ENCODE measurements at regions of chr3 and their contacts with region 1.

Region 1: DNA sequence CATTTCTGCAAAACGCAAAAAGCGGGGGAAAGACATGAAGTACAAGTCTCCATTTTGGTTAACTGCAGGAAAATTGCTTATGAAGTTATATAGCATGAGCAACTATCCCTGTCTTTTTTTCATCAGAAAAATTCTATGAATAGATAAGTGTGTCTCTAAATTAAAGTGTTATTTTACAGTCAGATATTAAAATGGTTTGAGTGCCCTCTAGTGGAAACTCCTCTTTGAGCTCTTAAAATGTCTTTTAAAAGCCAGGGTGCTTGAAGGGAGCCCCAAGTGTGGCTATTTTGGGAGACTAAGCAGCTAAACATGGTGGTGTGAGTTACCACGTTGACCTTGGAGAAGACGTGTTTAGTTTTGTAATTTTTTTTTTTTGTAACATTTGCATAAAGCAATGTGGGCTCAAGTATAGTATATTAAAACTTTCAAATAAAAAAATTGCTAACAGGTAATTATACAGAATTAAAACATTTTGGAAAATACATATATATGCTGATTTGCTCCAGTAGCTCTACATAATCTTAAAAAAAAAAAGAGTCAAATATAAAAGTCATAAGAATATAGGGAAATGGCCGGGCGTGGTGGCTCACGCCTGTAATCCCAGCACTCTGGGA is 77.2 kb downstream of the PPP2R3A start:
- DNase-seq: peak; percentile 80
- ATAC-seq: peak; percentile 67
- H3K4me3 ChIP-seq: no peak overlapping the region
- H3K27ac ChIP-seq: no peak overlapping the region
- H3K4me1 ChIP-seq: no peaks in the 10 kb centered on the region
- H3K27me3 ChIP-seq: no peaks in the 10 kb centered on the region
- CTCF ChIP-seq: peak; percentile 75

Region 2: GRCh38 chr3:135905058-135905724 is 137.5 kb before region 1 on chr3:
- CTCF ChIA-PET with region 1: interaction called, 8 read pairs
- POLR2A ChIA-PET with region 1: no interaction called
- intact Hi-C with region 1: loop called (anchors 1 kb)
- DNase-seq: peak; percentile 49
- ATAC-seq: peak; percentile 29; the same call in 1 of the 2 replicates
- H3K4me3 ChIP-seq: no peak overlapping the region
- H3K27ac ChIP-seq: no peak overlapping the region
- H3K4me1 ChIP-seq: peaks cover 23% of the 10 kb centered on the region
- H3K27me3 ChIP-seq: no peaks in the 10 kb centered on the region
- CTCF ChIP-seq: peak; percentile 57

Region 3: GRCh38 chr3:135918580-135918962 is 124.1 kb before region 1 on chr3:
- CTCF ChIA-PET with region 1: interaction called, 3 read pairs
- POLR2A ChIA-PET with region 1: no interaction called
- intact Hi-C with region 1: loop called (anchors 1 kb)
- DNase-seq: peak; percentile 52
- ATAC-seq: peak; percentile 71
- H3K4me3 ChIP-seq: no peak overlapping the region
- H3K27ac ChIP-seq: no peak overlapping the region
- H3K4me1 ChIP-seq: no peaks in the 10 kb centered on the region; the same call in 1 of the 2 replicates
- H3K27me3 ChIP-seq: no peaks in the 10 kb centered on the region
- CTCF ChIP-seq: peak; percentile 67

Region 4: GRCh38 chr3:135965506-135966270 is 77.0 kb before region 1 on chr3 and contains the start of gene PPP2R3A:
- CTCF ChIA-PET with region 1: interaction called, 3 read pairs
- POLR2A ChIA-PET with region 1: no interaction called
- intact Hi-C with region 1: loop called (anchors 1 kb)
- DNase-seq: peak; percentile 69
- ATAC-seq: peak; percentile 80
- H3K4me3 ChIP-seq: peak within 1 kb of the TSS; percentile 82
- H3K27ac ChIP-seq: peak within 1 kb of the TSS; percentile 50
- H3K4me1 ChIP-seq: peaks cover 36% of the 10 kb centered on the region
- H3K27me3 ChIP-seq: no peaks in the 10 kb centered on the region
- CTCF ChIP-seq: no peak
- total RNA-seq, gene PPP2R3A: 9.4 and 12.3 TPM in 2 replicates

Region 5: GRCh38 chr3:135992072-135992471 is 50.6 kb before region 1 on chr3:
- CTCF ChIA-PET with region 1: interaction called, 4 read pairs
- POLR2A ChIA-PET with region 1: no interaction called
- intact Hi-C with region 1: loop called (anchors 2 kb)
- DNase-seq: peak; percentile 75
- ATAC-seq: peak; percentile 80
- H3K4me3 ChIP-seq: peak overlapping the region; percentile 47
- H3K27ac ChIP-seq: peak overlapping the region; percentile 86
- H3K4me1 ChIP-seq: peaks cover 22% of the 10 kb centered on the region
- H3K27me3 ChIP-seq: no peaks in the 10 kb centered on the region
- CTCF ChIP-seq: no peak

Region 6: GRCh38 chr3:136022529-136023263 is 20.0 kb before region 1 on chr3:
- CTCF ChIA-PET with region 1: no interaction called
- POLR2A ChIA-PET with region 1: no interaction called
- intact Hi-C with region 1: no loop called
- DNase-seq: no peak
- ATAC-seq: no peak
- H3K4me3 ChIP-seq: no peak overlapping the region
- H3K27ac ChIP-seq: no peak overlapping the region
- H3K4me1 ChIP-seq: peaks cover 18% of the 10 kb centered on the region
- H3K27me3 ChIP-seq: no peaks in the 10 kb centered on the region
- CTCF ChIP-seq: no peak

Region 7: DNA sequence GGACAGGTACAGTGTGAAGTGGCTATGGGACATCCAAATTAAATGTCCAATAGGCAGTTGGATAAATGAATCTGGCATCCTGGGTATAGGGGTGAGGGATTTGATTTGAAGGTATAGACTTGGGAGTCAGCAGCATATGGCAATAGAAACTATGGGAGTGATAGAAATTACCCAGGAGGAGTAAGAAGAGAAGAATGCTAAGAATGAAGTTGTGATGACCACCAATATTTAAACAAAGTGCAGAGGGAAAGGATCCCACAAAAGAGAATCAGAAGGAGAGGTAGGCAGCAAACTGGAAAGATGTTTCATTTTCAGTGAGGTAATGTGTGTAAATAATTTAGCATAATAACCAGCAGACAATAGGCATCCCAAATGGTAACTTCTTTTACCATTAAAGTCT is 167.2 kb after region 1 on chr3:
- CTCF ChIA-PET with region 1: no interaction called
- POLR2A ChIA-PET with region 1: no interaction called
- intact Hi-C with region 1: no loop called
- DNase-seq: peak; percentile 40
- ATAC-seq: no peak
- H3K4me3 ChIP-seq: no peak overlapping the region
- H3K27ac ChIP-seq: no peak overlapping the region
- H3K4me1 ChIP-seq: no peaks in the 10 kb centered on the region
- H3K27me3 ChIP-seq: no peaks in the 10 kb centered on the region
- CTCF ChIP-seq: no peak

Measured in PC-3 (cell line).